Activated CD4-positive, alpha-beta T cell treated with anti-CD3 and anti-CD28 coated beads for 36 hours (primary cell): ENCODE measurements at regions of chr9 and their contacts with region 1.

Region 1: GRCh38 chr9:91422758-91423711 is 597 bp downstream of the NFIL3 start:
- DNase-seq: peak; percentile 83
- ATAC-seq: peak; percentile 8
- H3K4me3 Mint-ChIP-seq: peak overlapping the region; percentile 98
- H3K27ac Mint-ChIP-seq: peak overlapping the region; percentile 95
- H3K4me1 Mint-ChIP-seq: peaks cover 55% of the 10 kb centered on the region
- H3K27me3 Mint-ChIP-seq: no peaks in the 10 kb centered on the region

Region 2: DNA sequence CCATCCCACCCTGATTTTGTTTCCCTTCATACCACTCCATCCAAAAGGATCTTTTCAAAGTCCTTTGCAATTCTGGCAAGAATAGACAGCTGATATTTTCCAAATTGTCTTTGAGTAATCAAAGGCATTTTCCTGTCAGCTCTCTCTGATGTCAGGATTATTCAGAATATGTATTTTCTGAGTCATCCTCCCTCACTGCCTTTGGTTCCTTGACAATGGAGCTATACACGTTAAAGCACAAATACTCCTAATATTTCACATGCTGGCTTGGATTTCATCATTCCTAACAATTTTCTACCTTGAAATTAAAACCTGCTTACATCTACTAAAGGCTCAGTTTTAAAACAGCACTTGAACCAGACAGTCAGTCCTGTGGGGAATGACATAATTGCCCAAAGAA is 1438.8 kb before region 1 on chr9:
- CTCF ChIA-PET with region 1: no interaction called
- POLR2A ChIA-PET with region 1: no interaction called
- intact Hi-C with region 1: loop called in 1 of 2 experiments (anchors 5 kb)
- DNase-seq: no peak
- ATAC-seq: peak; percentile 56
- H3K4me3 Mint-ChIP-seq: peak overlapping the region; percentile 27
- H3K27ac Mint-ChIP-seq: peak overlapping the region; percentile 89
- H3K4me1 Mint-ChIP-seq: peaks cover 47% of the 10 kb centered on the region
- H3K27me3 Mint-ChIP-seq: peaks cover 33% of the 10 kb centered on the region

Region 3: DNA sequence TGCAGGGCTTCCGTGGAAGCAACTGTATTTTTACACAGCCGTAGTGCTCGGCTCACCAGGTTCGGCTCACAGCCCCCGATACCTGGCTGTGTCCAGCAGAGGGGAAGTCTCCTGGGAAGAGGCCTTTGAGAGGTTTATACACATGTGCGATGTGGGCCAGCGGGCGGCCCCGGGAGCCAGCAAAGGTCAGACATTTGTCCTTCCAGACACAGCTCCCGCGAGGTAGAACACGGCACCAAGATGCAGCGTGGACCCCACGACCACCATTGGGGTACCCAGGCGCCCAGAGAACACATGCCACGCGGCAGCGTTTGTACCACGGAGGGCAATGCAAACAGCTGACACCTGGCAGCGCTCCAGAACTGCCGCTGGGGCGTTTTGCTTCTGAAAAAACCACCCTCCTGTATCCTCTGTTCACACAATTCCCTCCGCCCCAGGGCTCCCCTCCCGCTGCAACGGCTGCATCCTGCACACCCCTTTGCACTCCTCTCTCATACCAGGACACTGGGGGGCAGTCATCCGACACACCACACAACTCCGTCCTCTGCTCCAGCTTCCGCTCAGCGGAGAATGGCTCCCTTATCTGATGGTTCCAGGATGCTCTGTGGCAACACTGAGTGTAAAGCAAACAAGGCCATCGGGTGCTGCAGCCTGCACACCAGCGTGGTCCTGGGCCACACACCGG is 386.1 kb before region 1 on chr9:
- CTCF ChIA-PET with region 1: interaction called, 14 read pairs
- POLR2A ChIA-PET with region 1: no interaction called
- intact Hi-C with region 1: loop called (anchors 1 to 2 kb)
- DNase-seq: peak; percentile 87
- ATAC-seq: peak; percentile 89
- H3K4me3 Mint-ChIP-seq: peak overlapping the region; percentile 19
- H3K27ac Mint-ChIP-seq: peak overlapping the region; percentile 86
- H3K4me1 Mint-ChIP-seq: peaks cover 52% of the 10 kb centered on the region
- H3K27me3 Mint-ChIP-seq: peaks cover 9% of the 10 kb centered on the region

Region 4: GRCh38 chr9:91101611-91102168 is 321.3 kb before region 1 on chr9:
- CTCF ChIA-PET with region 1: no interaction called
- POLR2A ChIA-PET with region 1: interaction called, 11 read pairs
- intact Hi-C with region 1: loop called (anchors 1 to 2 kb)
- DNase-seq: peak; percentile 96
- ATAC-seq: peak; percentile 82
- H3K4me3 Mint-ChIP-seq: peak overlapping the region; percentile 81
- H3K27ac Mint-ChIP-seq: peak overlapping the region; percentile 97
- H3K4me1 Mint-ChIP-seq: peaks cover 70% of the 10 kb centered on the region
- H3K27me3 Mint-ChIP-seq: no peaks in the 10 kb centered on the region

Region 5: GRCh38 chr9:91170951-91171350 is 252.1 kb before region 1 on chr9:
- CTCF ChIA-PET with region 1: no interaction called
- POLR2A ChIA-PET with region 1: no interaction called
- intact Hi-C with region 1: no loop called
- DNase-seq: no peak
- ATAC-seq: no peak
- H3K4me3 Mint-ChIP-seq: no peak overlapping the region
- H3K27ac Mint-ChIP-seq: no peak overlapping the region
- H3K4me1 Mint-ChIP-seq: peaks cover 33% of the 10 kb centered on the region
- H3K27me3 Mint-ChIP-seq: no peaks in the 10 kb centered on the region

Region 6: GRCh38 chr9:91207729-91208418 is 215.2 kb before region 1 on chr9:
- CTCF ChIA-PET with region 1: interaction called, 6 read pairs
- POLR2A ChIA-PET with region 1: interaction called, 15 read pairs
- intact Hi-C with region 1: loop called (anchors 1 kb)
- DNase-seq: peak; percentile 51
- ATAC-seq: peak; percentile 80
- H3K4me3 Mint-ChIP-seq: peak overlapping the region; percentile 36
- H3K27ac Mint-ChIP-seq: peak overlapping the region; percentile 98
- H3K4me1 Mint-ChIP-seq: peaks cover 75% of the 10 kb centered on the region
- H3K27me3 Mint-ChIP-seq: no peaks in the 10 kb centered on the region

Region 7: DNA sequence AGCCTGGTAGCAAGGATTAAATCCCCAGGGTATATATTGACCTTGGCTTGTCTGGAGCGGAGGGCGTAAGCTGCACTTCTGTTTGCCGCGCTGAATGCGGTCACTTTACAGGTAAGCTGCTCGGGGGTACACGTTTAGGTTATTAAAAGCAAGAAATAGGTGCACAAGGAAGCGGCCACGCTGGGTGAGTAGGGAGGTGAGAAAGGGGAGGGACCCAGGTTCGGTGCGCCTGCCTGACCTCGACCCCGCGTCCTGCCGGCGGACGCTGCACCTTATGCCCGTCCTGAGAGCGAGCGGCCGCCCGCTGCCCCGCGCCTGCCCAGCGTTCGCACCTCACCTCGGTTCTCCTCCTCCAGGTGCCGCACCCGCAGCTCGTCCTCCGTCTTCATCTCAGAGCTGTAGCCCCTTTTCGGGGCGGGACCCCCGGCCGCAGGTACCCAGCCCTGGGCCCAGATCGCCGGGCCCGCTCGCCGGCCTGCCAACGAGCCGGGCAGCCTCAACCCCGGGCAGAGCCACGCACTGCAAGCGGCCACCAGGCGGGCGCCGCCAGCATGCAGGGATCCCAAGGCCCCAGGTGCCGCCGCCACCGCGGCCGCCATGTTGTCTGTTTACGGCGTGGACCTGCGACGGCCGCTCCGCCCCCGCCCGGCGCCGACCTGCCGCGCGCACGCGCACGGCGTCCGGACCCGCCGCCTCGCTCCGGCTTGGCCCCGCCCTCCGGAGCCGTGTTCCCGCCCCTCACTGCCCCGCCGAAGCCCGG is 61.6 kb before region 1 on chr9 and contains the start of gene AUH:
- CTCF ChIA-PET with region 1: interaction called, 4 read pairs
- POLR2A ChIA-PET with region 1: interaction called, 24 read pairs
- intact Hi-C with region 1: loop called in 1 of 2 experiments (anchors 1 kb)
- DNase-seq: peak; percentile 93
- ATAC-seq: peak; percentile 74
- H3K4me3 Mint-ChIP-seq: peak within 1 kb of the TSS; percentile 87
- H3K27ac Mint-ChIP-seq: peak within 1 kb of the TSS; percentile 86
- H3K4me1 Mint-ChIP-seq: peaks cover 53% of the 10 kb centered on the region
- H3K27me3 Mint-ChIP-seq: no peaks in the 10 kb centered on the region
- total RNA-seq, gene AUH: 30.4 to 30.8 TPM

Region 8: GRCh38 chr9:91443321-91443993 is 20.4 kb after region 1 on chr9:
- CTCF ChIA-PET with region 1: no interaction called
- POLR2A ChIA-PET with region 1: no interaction called
- intact Hi-C with region 1: no loop called
- DNase-seq: no peak
- ATAC-seq: no peak
- H3K4me3 Mint-ChIP-seq: no peak overlapping the region
- H3K27ac Mint-ChIP-seq: no peak overlapping the region
- H3K4me1 Mint-ChIP-seq: no peaks in the 10 kb centered on the region
- H3K27me3 Mint-ChIP-seq: peaks cover 34% of the 10 kb centered on the region

Region 9: GRCh38 chr9:91750343-91750742 is 327.3 kb after region 1 on chr9:
- CTCF ChIA-PET with region 1: no interaction called
- POLR2A ChIA-PET with region 1: no interaction called
- intact Hi-C with region 1: no loop called
- DNase-seq: no peak
- ATAC-seq: no peak
- H3K4me3 Mint-ChIP-seq: no peak overlapping the region
- H3K27ac Mint-ChIP-seq: no peak overlapping the region
- H3K4me1 Mint-ChIP-seq: no peaks in the 10 kb centered on the region
- H3K27me3 Mint-ChIP-seq: no peaks in the 10 kb centered on the region